A673 (cell line): ENCODE measurements at regions of chr9 and their contacts with region 1.

Region 1: DNA sequence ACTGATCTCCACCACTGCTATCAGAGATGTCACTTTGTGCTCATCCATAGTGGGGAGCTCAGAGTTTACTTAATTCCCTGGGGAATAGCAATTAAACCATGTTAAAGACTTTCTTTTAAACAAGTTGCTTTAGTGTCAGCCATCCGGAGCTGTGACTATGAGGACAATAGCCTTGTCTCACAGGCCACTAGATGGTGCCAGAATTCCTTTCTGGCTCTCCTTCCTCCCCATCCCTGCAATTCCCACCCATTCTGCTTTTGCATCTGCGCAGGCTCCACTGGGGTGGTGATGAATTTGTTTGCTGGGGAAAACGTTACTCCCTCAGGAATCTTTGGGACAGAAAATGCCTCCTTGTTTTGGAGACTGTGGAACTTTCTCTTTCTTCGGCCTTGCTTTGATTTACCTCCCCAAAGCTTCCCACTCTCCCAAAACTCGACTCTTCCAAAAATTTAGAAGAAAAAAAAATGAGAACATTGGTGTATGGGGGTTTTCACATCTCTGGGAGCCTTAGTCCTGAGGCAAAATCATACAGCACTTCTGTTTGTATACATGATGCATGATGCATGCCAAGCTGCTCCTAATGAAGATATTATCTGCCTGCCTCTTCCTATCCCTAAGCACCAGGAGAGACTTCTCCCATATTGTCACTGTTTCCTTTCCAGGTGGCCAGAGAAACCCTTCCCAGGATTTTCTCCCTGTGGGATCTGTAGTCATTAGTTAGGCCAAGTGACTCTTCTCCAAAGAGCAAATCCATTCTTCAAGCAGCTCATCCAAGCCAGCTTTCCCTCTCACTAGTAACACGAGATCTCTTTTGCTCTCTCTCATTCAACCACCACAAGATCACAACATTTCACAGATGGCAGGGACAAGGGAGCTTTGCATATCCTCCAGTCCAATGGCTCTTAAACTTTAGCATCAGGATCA is 466.1 kb downstream of the TLR4 start:
- DNase-seq: peak; percentile 62
- H3K4me3 ChIP-seq: no peak overlapping the region
- H3K27ac ChIP-seq: no peak overlapping the region
- H3K4me1 ChIP-seq: no peaks in the 10 kb centered on the region
- H3K27me3 ChIP-seq: no peaks in the 10 kb centered on the region
- CTCF ChIP-seq: peak; percentile 71

Region 2: GRCh38 chr9:117644133-117644931 is 526.0 kb before region 1 on chr9:
- CTCF ChIA-PET with region 1: no interaction called
- POLR2A ChIA-PET with region 1: no interaction called
- intact Hi-C with region 1: loop called (anchors 10 kb)
- DNase-seq: peak; percentile 80
- H3K4me3 ChIP-seq: no peak overlapping the region
- H3K27ac ChIP-seq: no peak overlapping the region
- H3K4me1 ChIP-seq: no peaks in the 10 kb centered on the region
- H3K27me3 ChIP-seq: peaks cover 55% of the 10 kb centered on the region
- CTCF ChIP-seq: peak; percentile 97

Region 3: DNA sequence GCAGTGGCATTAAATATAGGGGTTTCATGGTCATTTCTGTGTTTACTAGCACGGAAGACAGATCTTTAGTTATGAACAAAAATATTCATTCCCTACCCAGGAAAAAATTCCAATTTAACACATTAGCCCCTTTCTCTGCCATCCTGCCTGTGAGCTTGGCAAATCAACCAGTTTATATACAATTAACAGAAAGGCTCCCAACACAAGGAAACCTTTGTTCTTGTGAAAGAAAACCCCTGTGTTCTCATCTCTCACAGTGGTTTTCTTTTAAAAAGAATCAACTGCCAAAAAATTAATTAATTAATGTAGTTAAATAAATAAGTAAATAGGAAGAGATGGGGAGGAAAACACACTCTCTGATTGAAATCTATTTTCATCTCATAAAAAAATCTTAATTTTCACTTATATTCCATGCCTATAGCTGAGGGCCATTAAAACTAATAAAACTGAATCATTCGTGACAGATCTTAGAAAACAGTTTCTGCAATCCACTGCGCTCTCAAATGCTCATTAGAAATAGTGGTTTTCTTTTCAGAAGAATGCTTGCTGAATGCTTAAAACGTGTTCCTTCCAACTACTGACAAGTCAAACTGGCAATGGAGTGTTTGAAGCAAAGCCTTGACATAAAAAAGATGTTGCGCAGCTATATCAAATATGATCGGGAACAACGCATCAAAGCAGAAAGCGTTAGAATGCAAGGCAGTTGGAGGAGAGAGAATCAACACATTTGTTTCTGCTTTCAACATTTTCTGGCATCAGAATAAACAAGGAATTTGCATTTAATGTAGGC is 78.4 kb before region 1 on chr9:
- CTCF ChIA-PET with region 1: no interaction called
- POLR2A ChIA-PET with region 1: no interaction called
- intact Hi-C with region 1: no loop called
- DNase-seq: no peak
- H3K4me3 ChIP-seq: no peak overlapping the region
- H3K27ac ChIP-seq: no peak overlapping the region
- H3K4me1 ChIP-seq: no peaks in the 10 kb centered on the region
- H3K27me3 ChIP-seq: peaks cover 4% of the 10 kb centered on the region
- CTCF ChIP-seq: no peak